Posterior vena cava (tissue), 2 donors: ENCODE measurements at regions of chr7 and their contacts with region 1.

Region 1: GRCh38 chr7:4681886-4682620 is at the start of gene FOXK1:
- DNase-seq: peak; percentile 93
- total RNA-seq, gene FOXK1: 30.5 to 32.3 TPM

Region 2: DNA sequence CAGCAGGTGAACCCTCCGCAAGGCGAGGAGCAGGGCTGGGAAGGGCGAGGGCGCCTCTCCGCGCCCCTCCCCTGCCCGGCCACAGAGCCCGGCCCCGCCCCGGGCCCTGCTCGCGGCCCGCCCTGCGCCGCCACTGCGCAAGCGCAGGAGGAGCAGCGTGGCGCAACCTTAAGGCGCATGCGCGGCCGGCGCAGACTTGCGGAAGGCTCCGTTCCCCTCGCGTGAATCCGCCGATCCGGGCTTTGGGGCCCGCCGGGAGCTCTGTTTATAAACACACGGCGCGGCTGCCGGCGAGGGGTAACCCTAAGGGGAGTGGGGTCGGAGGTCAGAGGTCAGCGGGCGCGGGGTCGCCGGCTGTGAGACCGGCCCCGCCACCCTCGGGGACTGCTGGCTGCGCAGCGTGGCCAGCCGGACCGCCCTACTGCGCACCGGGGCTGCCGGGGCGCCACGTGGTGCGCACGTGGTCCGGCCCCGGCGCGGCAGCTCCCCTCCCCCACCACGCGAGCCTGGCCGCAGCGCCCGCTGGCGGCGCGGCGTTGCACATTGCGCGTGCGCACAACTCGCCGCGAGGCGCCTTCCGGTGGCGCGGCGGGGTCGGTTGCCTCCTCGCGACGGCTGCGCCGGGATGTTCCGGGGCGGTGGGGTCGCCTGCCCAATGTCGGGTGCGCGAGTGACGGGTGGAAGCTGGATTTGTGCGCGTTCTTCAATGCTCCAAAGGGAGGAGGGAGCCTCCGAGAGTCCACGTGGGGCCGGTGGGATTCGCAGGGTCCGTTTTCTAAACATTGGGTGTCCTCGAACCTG is 40.2 kb before region 1 on chr7:
- intact Hi-C with region 1: loop called (anchors 5 kb)
- DNase-seq: peak; percentile 99

Region 3: DNA sequence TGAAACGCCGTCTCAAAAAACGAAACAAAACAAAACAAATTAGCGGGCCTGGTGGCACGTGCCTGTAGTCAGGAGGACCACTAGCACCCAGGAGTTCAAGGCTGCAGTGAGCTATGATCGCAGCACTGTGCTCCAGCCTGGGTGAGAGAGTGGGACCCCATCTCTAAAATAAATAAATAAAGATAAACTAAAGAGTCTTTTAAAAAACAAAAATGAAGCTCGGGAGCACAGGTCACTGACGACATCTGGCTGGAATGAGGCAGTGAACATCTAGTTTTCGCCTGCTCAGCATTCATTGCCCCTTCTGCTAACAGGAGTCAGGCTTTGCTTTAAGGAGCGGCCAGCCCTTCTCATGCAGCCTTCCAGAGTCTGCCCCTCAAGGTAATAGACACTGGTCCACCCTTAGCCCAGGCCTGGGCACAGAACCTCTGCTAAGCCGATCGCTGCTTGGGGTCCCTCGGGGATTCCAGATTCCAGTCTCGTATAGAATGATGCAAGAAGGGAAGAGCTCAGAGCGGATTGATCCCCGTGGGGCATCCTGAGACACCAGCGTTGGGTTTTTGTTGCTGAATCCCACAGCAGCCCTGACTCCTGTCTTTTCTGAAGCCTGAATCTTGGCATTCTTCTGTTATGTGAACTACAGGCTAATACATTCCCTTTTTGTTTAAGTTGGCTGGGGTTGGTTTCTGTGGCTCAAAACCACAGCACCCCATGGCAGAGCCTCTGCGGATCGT is 14.1 kb before region 1 on chr7:
- intact Hi-C with region 1: loop called in 1 of 2 experiments (anchors 1 kb)
- DNase-seq: peak; percentile 50

Region 4: GRCh38 chr7:4725014-4725849 is 43.2 kb after region 1 on chr7:
- intact Hi-C with region 1: loop called in 1 of 2 experiments (anchors 5 kb)
- DNase-seq: peak; percentile 95

Region 5: DNA sequence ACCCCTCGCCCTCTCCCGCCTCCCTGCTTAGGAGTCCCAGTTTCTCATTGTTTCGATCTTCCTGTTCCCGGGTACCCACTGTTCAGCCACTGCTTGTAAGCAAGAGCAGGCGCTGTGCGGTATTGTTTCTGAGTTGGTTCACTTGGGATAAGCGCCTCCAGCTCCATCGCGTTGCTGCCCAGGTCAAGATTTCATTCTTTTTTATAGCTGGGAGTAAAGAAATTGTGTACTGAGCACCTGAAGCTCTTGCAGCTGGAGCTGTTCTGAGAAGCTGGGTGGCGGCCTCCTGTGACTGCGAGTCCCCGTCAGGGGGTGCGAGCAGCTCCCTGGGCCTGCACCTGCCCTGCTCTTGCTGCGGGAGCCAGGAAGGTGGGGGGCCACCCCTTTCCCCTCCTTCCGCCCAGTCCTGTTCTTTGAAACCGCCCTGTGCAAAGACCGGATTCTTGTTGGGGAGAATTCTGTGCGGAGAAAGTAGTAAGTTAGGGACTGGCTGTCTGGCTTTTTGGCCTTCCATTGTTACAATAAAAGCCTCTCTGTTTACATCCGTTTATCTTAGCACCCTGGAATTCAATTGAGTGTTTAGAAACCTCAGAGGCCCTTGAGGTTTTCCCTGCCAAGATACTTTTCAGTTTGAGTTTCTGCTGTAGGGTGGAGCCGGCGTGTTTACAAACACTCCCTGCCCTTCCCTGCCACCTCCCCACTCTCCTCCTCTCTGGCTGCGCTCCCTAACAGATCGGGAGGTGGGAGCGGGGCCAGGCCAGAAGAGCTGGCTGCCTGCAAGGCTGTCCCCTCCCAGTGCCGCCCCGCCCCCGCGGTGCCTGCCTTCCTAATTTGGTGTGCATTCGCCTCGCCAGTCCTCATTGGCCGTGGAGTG is 62.6 kb after region 1 on chr7:
- intact Hi-C with region 1: loop called in 1 of 2 experiments (anchors 5 kb)
- DNase-seq: peak; percentile 100

Region 6: DNA sequence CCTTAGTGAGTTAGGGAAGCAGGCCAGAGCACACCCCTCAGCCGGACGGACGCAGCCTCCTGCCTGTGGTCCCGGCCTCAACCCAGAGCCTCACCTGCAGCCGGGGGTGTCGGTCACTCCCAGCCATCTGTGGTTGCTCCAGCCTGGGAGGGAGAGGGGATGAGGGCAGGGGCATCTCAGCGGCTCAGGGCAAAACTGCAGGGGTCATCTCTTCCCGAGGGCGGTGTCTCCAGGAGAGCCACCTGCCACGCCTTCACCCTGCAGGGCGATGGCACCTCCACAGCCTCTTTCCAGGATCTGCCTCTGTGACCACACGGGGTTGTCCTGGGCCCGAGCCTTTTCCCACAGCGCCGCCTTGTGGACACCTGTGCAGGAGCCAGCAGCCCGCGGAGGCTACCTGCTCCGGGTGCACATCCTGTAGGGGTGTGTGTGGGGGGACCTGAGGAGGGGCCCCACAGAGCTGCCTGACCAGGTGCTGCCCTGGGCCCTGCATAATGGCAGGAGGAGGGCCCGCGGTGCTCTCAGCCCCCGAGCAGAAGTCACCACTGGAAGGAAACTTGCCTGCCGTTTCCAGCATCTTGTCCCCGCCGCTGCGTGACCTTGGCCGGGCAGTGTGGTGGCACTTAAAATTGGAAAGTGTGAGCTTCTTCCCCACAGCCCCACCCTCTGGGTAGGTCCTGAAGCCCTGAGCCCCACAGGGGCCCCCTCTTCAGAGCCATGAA is 71.8 kb after region 1 on chr7:
- intact Hi-C with region 1: loop called (anchors 5 kb)
- DNase-seq: peak; percentile 92

Region 7: DNA sequence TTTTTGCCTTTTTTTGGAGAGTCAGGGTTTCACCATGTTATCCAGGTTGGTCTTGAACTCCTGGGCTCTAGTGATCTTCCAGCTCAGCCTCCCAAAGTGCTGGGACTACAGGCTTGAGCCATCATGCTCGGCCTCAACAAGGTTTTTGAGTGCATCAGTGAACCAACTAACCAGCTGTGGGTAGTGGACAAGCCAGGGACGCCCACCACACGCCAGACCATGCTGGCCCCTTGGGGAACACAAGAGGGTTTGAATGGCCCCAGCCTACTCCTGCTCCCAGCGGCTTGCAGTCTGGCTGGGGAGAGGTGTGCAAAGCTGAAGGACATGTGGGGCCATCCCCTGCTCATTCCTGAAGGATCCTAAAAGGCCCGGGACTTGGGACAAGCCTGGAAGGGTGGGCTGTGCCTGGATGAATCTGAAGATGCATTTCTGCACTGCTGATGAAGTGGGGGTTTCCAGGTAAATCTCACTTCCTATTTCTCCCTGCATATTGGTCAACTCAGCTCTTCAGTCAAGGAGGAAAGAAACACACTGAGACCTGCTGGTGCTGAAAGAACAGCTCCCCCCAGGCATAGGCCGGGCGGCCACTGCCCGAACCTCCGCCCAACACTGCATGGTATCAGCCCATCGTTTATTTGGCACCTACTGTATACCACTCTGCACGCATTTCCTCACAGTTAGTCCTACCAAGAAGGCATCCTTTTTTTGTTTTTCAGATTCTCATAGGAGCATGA is 270.0 kb after region 1 on chr7:
- intact Hi-C with region 1: no loop called
- DNase-seq: no peak